ENCODE measurements at regions of chr18 and their contacts with region 1.

Region 1: DNA sequence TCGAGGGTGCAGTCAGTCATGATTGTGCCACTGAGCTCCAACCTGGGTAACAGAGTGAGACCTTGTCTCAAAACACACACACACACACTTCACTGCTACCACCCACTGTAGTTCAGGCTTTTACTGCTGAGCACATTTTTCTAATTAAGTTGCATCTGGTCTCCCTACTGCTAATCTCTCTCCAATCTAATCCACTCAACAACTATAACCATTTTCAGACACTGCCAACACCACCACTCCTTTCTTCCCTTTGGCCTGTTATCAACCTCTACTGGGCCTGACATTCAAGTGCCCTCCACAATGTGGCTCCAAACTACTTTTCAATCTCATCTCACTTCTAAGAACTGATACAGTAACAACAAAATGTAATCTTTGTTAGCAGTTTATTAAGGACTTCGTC is 44.8 kb downstream of the RMP24 start:
- DNase-seq: no peak
- H3K4me3 Mint-ChIP-seq: no peak overlapping the region
- H3K27ac Mint-ChIP-seq: no peak overlapping the region
- H3K4me1 Mint-ChIP-seq: no peaks in the 10 kb centered on the region
- H3K27me3 Mint-ChIP-seq: no peaks in the 10 kb centered on the region
- CTCF ChIP-seq: no peak

Region 2: DNA sequence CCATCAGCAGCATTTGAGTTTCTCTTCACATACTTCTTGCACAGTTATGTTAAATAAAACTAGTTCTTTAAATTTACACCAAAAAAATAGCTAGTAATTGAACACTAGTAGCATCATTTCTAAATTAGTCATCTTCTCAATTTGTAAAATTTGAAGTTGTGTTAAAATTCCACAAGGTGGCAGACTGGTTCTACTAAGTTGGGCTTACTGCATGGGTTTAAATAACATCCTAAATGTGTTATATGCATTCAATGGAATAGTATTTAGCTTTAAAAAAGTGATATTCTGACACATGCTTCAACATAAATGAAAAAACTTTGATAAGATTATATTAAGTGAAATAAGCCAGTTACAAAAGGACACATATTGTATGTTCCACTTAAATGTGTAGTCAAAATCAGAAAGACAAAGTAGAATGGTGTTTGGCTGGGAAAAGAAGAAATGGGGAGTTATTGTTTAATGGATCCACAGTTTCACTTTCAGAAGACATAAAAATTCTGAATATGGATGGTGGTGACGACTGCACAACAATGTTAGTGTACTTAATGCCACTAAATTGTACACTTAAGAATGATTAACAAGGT is 78.8 kb after region 1 on chr18:
- CTCF ChIA-PET with region 1: interaction called, 10 read pairs
- intact Hi-C with region 1: no loop called
- DNase-seq: peak; percentile 5
- H3K4me3 Mint-ChIP-seq: no peak overlapping the region
- H3K27ac Mint-ChIP-seq: no peak overlapping the region
- H3K4me1 Mint-ChIP-seq: no peaks in the 10 kb centered on the region
- H3K27me3 Mint-ChIP-seq: no peaks in the 10 kb centered on the region
- CTCF ChIP-seq: peak; percentile 29